Activated T-helper 2 cell treated with anti-CD3 and anti-CD28 coated beads, Interferon-gamma antibody, Interleukin-2, Interleukin-4, amounts not matched to agents 10 μg/mL and 5 μg/mL and 100 μg/mL, durations not matched to agents 14 hours and 24 hours and 36 hours (primary cell): ENCODE measurements at regions of chr16 and their contacts with region 1.

Region 1: DNA sequence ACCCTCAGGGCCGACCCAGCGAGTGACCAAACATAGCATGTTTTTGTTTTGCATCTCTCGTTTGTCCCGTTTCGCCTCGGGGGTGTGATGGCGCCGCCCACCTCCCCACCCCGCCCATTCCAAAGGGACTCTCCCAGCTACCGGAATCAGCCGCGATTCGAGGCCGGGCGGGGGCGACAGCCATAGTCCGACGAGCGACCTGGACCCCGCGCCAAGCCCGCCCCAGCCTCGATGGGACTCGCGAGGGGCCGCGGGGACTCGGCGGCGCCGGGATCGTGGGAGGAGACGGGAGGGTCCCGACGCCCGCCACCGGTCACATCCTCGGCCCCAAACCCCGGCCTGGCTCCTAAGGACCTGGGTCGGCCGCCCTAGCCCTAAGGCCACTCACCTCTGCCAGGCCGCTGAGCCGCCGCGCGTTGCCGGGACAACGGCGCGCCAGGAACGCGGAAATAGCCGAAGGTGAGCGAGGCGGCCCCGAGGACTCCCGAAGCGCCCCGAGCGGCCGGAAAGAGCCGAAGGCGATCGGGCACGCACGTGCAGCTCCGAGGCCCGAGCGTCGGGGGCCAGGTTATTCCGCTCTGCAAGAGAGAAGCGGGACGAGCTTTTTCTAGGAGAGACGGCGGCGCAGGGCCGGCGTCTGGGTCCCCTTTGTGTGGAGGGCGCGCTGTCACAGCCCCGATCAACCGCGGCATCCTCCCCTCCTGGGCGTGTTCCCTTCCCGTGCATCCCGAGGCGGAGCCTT is 1.4 kb downstream of the IFT140 start:
- DNase-seq: peak; percentile 90
- H3K4me3 Mint-ChIP-seq: peak overlapping the region; percentile 91
- H3K27ac Mint-ChIP-seq: peak overlapping the region; percentile 99
- H3K4me1 Mint-ChIP-seq: peaks cover 19% of the 10 kb centered on the region
- H3K27me3 Mint-ChIP-seq: no peaks in the 10 kb centered on the region

Region 2: GRCh38 chr16:1351582-1352362 is 258.7 kb before region 1 on chr16 and contains the starts of genes GNPTG and TSR3:
- intact Hi-C with region 1: loop called (anchors 5 kb)
- DNase-seq: peak; percentile 86
- H3K4me3 Mint-ChIP-seq: peak within 1 kb of the TSS; percentile 86
- H3K27ac Mint-ChIP-seq: peak within 1 kb of the TSS; percentile 72
- H3K4me1 Mint-ChIP-seq: peaks cover 14% of the 10 kb centered on the region
- H3K27me3 Mint-ChIP-seq: no peaks in the 10 kb centered on the region
- total RNA-seq, gene GNPTG: 21.3 and 24.1 TPM in 2 replicates
- total RNA-seq, gene TSR3: 64.1 and 72.9 TPM in 2 replicates

Region 3: DNA sequence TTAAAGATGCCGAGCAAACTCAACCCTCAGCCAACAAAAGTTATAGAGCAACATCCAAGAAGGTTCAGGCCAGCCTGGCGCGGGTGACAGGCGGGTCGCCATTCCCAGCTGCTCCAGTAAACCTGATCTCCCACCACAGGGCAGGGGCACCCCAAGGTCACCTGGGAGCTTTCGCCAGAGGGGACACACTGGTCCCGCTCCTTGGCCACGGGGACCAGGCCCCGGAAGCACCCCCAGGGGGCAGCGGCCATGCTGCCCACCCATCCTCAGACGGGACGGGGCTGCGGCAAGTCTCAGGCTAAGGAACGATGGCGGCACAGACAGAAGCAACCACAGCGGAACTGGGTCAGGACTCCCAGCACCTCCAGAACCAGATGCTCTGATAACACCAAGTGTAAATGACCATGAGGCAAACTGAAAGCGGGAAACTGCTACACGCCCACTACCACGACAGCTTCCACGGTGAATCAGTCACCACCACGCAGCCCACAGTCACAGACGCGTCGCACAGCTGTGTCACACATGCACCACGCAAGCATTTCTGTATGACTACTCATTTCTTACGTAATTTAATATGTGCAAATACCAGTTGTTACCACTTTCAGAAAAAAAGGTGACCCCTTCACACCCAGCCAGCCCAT is 152.0 kb before region 1 on chr16:
- intact Hi-C with region 1: no loop called
- DNase-seq: no peak
- H3K4me3 Mint-ChIP-seq: no peak overlapping the region
- H3K27ac Mint-ChIP-seq: no peak overlapping the region
- H3K4me1 Mint-ChIP-seq: peaks cover 3% of the 10 kb centered on the region
- H3K27me3 Mint-ChIP-seq: no peaks in the 10 kb centered on the region

Region 4: DNA sequence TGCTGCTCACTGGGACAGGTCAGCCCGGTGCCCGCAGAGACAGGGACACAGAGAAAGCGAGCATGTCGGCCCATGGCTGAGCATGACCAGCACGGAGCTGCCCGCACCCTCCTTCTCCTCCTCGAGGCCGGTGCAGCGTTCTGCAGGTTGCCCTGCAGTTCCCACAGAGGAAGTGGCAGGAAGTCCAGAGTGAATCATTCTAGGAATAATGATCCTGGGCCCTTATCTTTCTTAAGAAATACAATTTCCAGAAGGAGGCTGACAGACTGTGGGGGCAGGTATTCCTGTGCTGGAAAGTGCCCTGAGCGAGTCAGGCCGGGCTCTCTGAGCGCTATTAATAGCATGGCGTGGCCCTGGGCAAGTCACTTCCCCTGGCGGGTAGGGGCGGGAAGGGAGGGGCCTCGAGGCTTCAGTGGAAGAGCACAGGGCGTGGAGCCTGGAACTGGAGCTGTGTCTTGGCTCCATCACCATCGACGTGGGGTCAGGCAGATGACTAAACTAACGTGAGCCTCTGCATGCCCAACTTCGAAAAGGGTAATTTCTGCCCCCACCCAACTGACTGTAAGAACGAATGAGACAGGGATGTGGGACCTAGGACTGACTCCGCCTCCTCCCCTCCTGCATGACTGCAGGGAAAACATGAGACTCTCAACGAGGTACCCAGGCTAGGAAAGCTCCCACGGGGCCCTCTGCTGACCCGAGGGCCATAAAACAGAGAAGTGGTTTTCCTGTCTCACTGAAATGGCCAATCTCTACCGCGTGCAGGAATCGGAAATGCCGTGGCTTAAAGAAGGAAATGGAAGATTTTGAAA is 67.2 kb before region 1 on chr16:
- intact Hi-C with region 1: loop called (anchors 5 kb)
- DNase-seq: peak; percentile 40
- H3K4me3 Mint-ChIP-seq: peak overlapping the region; percentile 66
- H3K27ac Mint-ChIP-seq: peak overlapping the region; percentile 94
- H3K4me1 Mint-ChIP-seq: peaks cover 24% of the 10 kb centered on the region
- H3K27me3 Mint-ChIP-seq: no peaks in the 10 kb centered on the region

Region 5: GRCh38 chr16:1651094-1651973 is 40.9 kb after region 1 on chr16:
- intact Hi-C with region 1: no loop called
- DNase-seq: no peak
- H3K4me3 Mint-ChIP-seq: no peak overlapping the region
- H3K27ac Mint-ChIP-seq: no peak overlapping the region
- H3K4me1 Mint-ChIP-seq: peaks cover 12% of the 10 kb centered on the region
- H3K27me3 Mint-ChIP-seq: no peaks in the 10 kb centered on the region

Region 6: DNA sequence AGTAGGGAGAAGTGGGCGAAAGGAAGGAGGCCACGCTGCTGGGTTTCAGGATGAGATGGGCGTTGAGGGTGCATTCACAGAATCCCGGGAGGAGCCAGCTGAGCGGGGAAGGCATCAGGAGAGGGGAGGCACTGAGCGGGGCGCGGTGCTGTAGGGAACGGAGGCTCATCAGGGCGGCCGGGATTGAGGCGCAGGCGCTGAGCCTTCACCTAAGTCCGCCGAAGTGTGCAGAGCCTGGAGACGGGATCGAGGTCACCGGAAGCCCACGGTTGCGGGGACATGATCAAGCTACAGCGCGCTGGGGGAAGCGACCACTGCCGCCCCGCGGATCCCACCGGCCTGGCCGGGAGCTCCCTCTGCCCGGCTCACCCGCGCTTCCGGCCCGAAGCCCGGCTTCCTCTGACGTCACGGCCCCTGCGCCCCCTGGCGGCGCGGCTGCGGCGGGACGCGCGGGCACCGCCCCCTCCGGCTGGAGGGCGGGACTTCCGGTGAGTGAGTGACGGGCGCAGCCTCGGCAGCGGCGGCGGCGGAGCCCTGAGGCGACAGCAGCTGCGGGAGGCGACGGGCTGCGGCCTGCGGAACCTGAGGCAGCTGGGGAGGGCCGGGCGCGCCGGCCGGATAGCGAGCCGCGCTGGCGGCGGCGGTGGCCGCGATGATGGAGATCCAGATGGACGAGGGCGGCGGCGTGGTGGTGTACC is 95.4 kb after region 1 on chr16 and contains the start of gene MAPK8IP3:
- intact Hi-C with region 1: loop called (anchors 5 kb)
- DNase-seq: peak; percentile 94
- H3K4me3 Mint-ChIP-seq: peak within 1 kb of the TSS; percentile 96
- H3K27ac Mint-ChIP-seq: peak within 1 kb of the TSS; percentile 98
- H3K4me1 Mint-ChIP-seq: peaks cover 17% of the 10 kb centered on the region
- H3K27me3 Mint-ChIP-seq: no peaks in the 10 kb centered on the region
- total RNA-seq, gene MAPK8IP3: 74.8 and 77.5 TPM in 2 replicates